ENCODE measurements at regions of chr15 and their contacts with region 1.

Region 1: DNA sequence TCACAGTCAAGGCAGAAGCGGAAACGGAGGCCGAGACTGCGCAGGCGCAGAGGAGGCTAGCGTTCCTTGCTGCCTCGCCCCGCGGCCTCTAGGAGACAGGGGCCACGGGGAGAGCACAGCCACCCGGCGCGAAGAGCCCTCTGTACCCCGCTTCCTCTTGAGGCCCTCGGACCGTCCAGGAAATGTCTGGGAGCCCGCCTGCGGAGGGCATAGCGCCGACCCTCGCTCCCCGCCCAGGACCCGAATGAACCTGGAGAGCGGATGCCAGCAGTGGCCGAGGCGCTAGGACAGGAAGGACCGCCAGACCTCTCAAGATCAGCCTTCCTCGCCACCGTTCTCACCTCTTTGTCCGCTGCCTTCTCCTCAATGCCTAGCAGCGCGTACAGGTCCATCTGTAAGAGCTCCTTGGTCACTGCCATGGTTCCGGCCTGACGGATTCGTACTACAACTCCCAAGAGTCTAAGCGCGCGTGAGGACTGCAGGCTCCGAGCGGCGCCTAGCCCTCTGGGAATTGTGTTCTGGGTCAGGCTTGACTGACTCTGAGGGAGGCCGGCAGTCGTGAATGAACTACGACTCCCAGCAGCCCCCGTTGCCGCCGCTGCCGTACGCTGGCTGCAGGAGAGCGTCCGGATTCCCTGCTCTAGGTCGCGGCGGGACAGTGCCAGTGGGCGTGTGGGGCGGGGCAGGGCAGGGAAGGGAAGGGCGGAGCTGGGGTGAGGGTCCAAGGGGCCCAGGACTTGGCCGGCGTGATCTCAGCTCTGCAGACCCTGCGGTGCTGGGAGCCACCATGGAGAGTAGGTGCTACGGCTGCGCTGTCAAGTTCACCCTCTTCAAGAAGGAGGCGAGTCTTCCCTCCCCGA is at the starts of genes DNAJC17 and ZFYVE19:
- DNase-seq: peak; percentile 93
- H3K4me3 Mint-ChIP-seq: peak within 1 kb of the TSS; percentile 93
- H3K27ac Mint-ChIP-seq: peak within 1 kb of the TSS; percentile 100
- H3K4me1 Mint-ChIP-seq: peaks cover 17% of the 10 kb centered on the region
- H3K27me3 Mint-ChIP-seq: no peaks in the 10 kb centered on the region
- total RNA-seq, gene DNAJC17: 52.5 and 54.1 TPM in 2 replicates
- total RNA-seq, gene ZFYVE19: 36.2 and 38.6 TPM in 2 replicates

Region 2: DNA sequence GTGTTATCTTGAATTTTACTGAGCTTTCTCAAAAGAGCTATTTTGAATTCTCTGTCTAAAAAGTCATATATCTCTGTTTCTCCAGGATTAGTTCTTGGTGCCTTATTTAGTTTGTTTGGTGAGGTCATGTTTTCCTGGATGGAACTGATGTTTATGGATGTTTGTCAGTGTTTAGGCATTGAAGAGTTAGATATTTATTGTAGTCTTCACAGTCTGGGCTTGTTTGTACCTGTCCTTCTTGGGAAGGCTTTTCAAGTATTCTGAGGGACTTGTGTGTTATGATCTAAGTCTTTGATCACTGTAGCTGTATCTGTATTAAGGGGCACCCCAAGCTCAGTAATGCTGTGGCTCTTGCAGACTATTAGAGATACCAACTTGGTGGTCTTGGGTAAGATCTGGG is 122.9 kb before region 1 on chr15:
- intact Hi-C with region 1: loop called (anchors 1 kb)
- DNase-seq: no peak
- H3K4me3 Mint-ChIP-seq: no peak overlapping the region
- H3K27ac Mint-ChIP-seq: no peak overlapping the region
- H3K4me1 Mint-ChIP-seq: no peaks in the 10 kb centered on the region
- H3K27me3 Mint-ChIP-seq: no peaks in the 10 kb centered on the region

Region 3: GRCh38 chr15:40754883-40755811 is 52.1 kb before region 1 on chr15 and contains the start of gene RMDN3:
- intact Hi-C with region 1: loop called (anchors 1 kb)
- DNase-seq: peak; percentile 94
- H3K4me3 Mint-ChIP-seq: peak within 1 kb of the TSS; percentile 91
- H3K27ac Mint-ChIP-seq: peak within 1 kb of the TSS; percentile 97
- H3K4me1 Mint-ChIP-seq: peaks cover 38% of the 10 kb centered on the region
- H3K27me3 Mint-ChIP-seq: no peaks in the 10 kb centered on the region
- total RNA-seq, gene RMDN3: 39.0 and 42.2 TPM in 2 replicates

Region 4: GRCh38 chr15:40857601-40858341 is 50.5 kb after region 1 on chr15:
- intact Hi-C with region 1: loop called (anchors 5 kb)
- DNase-seq: peak; percentile 77
- H3K4me3 Mint-ChIP-seq: no peak overlapping the region
- H3K27ac Mint-ChIP-seq: no peak overlapping the region
- H3K4me1 Mint-ChIP-seq: peaks cover 18% of the 10 kb centered on the region
- H3K27me3 Mint-ChIP-seq: no peaks in the 10 kb centered on the region

Region 5: DNA sequence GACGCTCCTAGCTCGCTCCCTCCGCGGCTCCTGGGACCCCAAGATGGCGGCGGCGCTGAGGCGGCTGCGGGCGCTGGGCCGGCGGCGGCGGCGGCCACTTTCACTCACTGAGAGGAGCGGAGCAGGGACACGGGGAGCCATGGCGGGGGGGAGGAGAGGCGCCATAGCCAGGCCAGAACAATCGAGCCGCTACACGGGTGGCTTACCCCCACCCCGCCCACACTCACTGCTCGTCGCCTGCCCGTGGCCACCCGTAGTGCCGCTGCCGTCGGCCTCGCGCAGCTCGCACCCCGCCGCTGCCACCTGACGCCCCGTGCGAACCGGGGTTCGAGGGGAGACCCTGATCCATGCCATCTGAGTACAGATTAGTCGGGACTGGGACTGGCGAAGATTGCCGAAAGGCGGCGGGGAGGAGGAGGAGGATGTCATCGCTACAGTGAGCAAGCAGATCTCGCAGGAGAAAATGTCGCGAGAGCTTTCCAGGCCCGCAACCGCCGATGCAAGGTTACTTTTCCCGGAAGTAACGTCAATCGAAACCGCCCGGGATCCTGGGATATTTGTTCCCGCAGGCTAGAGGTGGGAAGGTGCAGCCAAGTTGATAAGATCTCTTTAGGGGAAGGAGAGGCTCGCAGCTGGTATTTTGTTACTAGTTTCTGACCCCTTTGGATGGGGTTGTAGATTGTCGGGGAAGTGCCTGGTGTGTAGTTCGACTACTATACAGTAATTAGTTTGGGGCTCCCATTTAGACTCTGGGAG is 309.0 kb after region 1 on chr15 and contains the start of gene INO80:
- intact Hi-C with region 1: loop called (anchors 1 kb)
- DNase-seq: peak; percentile 95
- H3K4me3 Mint-ChIP-seq: peak within 1 kb of the TSS; percentile 92
- H3K27ac Mint-ChIP-seq: peak within 1 kb of the TSS; percentile 99
- H3K4me1 Mint-ChIP-seq: peaks cover 20% of the 10 kb centered on the region
- H3K27me3 Mint-ChIP-seq: peaks cover 6% of the 10 kb centered on the region
- total RNA-seq, gene INO80: 39.2 and 39.6 TPM in 2 replicates

Region 6: GRCh38 chr15:42273102-42273899 is 1466.0 kb after region 1 on chr15 and contains the starts of genes GANC and TMEM87A:
- intact Hi-C with region 1: loop called (anchors 2 kb)
- DNase-seq: peak; percentile 95
- H3K4me3 Mint-ChIP-seq: peak within 1 kb of the TSS; percentile 99
- H3K27ac Mint-ChIP-seq: peak within 1 kb of the TSS; percentile 98
- H3K4me1 Mint-ChIP-seq: peaks cover 47% of the 10 kb centered on the region
- H3K27me3 Mint-ChIP-seq: no peaks in the 10 kb centered on the region
- total RNA-seq, gene GANC: 13.0 and 15.2 TPM in 2 replicates
- total RNA-seq, gene TMEM87A: 42.3 and 46.2 TPM in 2 replicates

Measured in activated T-helper 1 cell treated with anti-CD3 and anti-CD28 coated beads, Interleukin-12 subunit alpha, Interleukin-12 subunit beta, Interleukin-2, Interleukin-4 antibody, amounts not matched to agents 30 ng/mL and 10 ng/mL and 1 ng/mL, durations not matched to agents 14 hours and 24 hours and 36 hours (primary cell).